Right ventricle myocardium inferior (tissue), 1 donor: ENCODE measurements at regions of chr6 and their contacts with region 1.

Region 1: GRCh38 chr6:85642774-85643536 is at the start of gene SYNCRIP:
- DNase-seq: peak; percentile 99
- ATAC-seq: peak; percentile 94
- total RNA-seq, gene SYNCRIP: 53.0 TPM

Region 2: DNA sequence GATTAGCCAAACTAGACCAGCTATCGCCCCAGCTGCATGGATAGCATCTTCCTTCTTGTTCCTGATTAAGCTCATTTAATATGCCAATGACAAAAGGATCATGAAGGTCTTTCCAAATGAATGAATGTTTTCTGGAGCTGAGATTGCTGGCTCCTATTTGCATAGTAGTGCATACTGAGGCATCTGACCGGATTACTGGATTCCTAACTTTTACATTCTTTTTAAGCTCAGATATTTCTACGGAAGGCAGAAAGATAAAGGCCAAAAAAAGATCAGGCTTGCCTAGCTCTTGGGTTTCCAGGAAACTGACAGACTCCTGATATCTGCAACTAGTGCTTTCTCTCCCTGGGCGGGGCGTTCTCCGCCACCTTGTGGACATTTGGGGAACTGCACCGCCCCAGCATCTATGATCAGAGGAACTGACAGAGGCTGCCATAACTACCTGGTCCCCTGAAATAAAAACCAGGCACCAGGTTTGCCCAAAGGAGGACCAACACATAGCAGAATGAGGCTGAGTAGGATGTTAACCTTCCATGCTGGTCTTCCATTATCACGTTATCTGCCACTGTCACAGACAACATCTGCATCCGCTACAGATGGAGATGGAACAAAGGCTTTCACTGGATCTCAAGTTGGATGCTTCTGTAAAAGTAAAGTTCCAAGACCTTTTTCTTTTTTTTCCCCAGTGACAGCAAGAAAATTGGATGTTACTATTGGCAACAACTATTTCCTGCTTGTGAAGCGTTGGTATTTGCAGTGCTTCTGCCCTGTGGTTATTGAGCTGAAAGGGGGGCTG is 159.9 kb before region 1 on chr6:
- intact Hi-C with region 1: no loop called
- DNase-seq: peak; percentile 90
- ATAC-seq: peak; percentile 90

Region 3: DNA sequence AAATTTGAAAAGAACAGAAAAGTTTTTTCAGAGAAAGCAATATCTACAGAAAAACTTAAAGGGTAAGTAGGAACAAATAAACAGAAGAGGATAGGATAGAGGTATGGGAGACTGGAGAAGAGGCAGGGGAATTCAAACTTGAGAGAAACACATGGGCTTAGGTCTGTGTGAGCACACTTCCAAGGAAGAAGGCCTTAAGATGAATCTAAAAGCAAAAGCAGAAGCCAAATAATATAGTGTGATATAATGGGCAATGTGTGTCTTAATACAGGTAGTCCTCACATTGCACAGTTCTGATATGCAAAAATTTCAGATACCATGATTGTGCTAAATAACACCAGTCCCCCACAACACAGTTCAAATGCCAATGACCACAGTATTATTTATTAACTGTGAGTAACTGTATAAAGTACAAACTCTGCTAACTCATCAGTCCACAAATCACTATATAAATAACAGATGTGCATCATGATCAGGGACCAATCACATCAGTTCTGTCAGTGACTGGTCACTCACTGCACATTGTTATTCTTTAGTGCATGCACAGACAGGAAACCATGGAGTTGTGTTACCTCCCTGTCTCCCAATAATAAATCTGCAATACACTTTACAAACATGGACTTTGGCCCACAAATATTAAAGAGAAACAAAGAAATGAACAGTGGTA is 67.9 kb before region 1 on chr6:
- intact Hi-C with region 1: no loop called
- DNase-seq: no peak
- ATAC-seq: no peak

Region 4: GRCh38 chr6:85593438-85594196 is 49.3 kb before region 1 on chr6 and contains the start of gene SNX14:
- intact Hi-C with region 1: loop called (anchors 1 kb)
- DNase-seq: peak; percentile 98
- ATAC-seq: peak; percentile 99
- total RNA-seq, gene SNX14: 24.3 TPM

Region 5: GRCh38 chr6:85612690-85613474 is 30.1 kb before region 1 on chr6:
- intact Hi-C with region 1: no loop called
- DNase-seq: no peak
- ATAC-seq: no peak

Region 6: GRCh38 chr6:85678602-85679444 is 35.9 kb after region 1 on chr6:
- intact Hi-C with region 1: loop called (anchors 1 kb)
- DNase-seq: peak; percentile 99
- ATAC-seq: peak; percentile 99

Region 7: GRCh38 chr6:85865420-85866369 is 222.7 kb after region 1 on chr6:
- intact Hi-C with region 1: loop called (anchors 10 kb)
- DNase-seq: no peak
- ATAC-seq: no peak